Stomach (tissue), 19 donors: ENCODE measurements at regions of chr10 and their contacts with region 1.

Region 1: DNA sequence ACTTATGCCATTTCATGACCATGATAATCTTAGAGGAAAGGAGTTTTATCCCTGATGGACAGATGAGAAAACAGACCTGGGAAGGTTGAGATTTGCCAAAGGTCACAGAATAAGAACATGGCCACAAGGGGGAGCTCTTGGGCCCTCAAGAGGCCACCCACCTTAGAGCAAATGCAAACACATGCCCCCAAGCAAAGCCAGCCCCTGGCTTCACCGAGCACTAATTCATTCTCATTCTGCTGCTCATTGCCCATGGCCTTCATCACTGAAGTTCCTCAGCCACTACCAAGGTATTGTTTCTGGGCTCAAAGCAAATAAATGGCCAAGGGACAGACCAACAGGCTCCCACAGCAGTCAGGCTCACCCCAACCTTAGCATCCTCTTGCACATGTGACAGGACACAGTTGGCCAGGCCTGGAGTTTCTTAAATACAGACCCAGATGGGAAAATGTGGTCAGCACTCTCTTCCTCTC is 44.2 kb downstream of the PDLIM1 start:
- DNase-seq: peak; percentile 79 to 89
- H3K4me3 ChIP-seq: no peak overlapping the region
- H3K27ac ChIP-seq: peak overlapping the region in 4 of 5 donors; percentile 27 to 64 (median 52)
- H3K4me1 ChIP-seq: peaks cover 7 to 33% (median 14%) of the 10 kb centered on the region in 4 donors
- H3K27me3 ChIP-seq: no peaks in the 10 kb centered on the region
- CTCF ChIP-seq: peak in 5 of 7 experiments; percentile 30 to 81 (median 67)
- EP300 ChIP-seq: no peak
- POLR2A ChIP-seq: no peak

Region 2: GRCh38 chr10:95363303-95363912 is 116.8 kb after region 1 on chr10:
- intact Hi-C with region 1: loop called (anchors 5 kb)
- DNase-seq: peak; percentile 40 to 88
- H3K4me3 ChIP-seq: no peak overlapping the region
- H3K27ac ChIP-seq: peak overlapping the region in 2 of 5 donors; percentile 44 to 50
- H3K4me1 ChIP-seq: peaks cover 12 to 75% (median 42%) of the 10 kb centered on the region in 4 donors
- H3K27me3 ChIP-seq: no peaks in the 10 kb centered on the region
- CTCF ChIP-seq: peak in 5 of 7 experiments; percentile 79 to 88 (median 85)
- EP300 ChIP-seq: no peak
- POLR2A ChIP-seq: no peak